Activated B cell treated with CpG ODN at 0.5 μM for 24 hours (primary cell): ENCODE measurements at regions of chr22 and their contacts with region 1.

Region 1: DNA sequence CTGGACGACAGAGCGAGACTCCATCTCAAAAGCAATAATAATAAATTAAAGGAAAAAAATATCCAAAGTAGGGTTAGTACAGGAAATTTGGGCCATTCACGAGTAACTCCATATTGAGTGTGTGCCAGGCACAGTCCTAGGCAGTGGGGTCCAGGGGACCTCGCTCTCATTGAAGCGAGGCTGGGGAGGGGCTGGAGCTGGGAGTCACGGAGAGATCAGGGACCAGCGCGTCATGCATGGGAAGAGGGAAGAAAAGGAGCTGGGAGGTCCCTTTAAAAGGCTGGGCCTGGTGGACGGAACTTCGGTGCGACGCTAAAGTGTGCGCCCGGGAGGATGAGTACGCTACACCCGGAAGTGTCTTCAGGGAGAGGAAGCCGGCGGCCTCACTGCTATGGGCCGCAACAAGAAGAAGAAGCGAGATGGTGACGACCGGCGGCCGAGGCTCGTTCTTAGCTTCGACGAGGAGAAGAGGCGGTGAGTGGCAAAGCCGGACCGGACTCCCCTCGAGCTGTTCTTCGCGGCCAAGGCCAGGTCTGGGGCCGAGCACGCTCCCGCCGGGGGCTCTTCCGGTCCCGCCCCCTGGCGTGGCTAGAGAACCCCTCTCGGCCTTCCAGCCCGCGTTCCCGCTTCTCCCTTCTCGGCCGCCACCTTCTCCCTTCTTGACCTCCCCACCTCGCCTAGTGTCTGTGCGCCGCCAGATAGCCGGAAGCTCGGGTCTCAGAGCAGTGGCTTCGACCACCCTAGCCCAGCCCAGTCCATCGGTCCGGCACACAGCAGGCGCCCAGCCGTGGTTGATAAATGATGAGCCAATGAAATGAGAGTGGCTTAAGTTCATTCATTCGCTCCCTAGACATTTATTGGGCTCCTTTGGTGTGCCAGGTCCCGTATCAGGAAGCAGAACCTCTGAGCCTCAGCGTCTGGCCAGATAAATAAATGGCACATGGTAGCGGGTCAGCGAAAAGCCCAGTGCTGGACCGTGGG is at the start of gene NOL12:
- DNase-seq: peak; percentile 79
- ATAC-seq: peak; percentile 87
- H3K4me3 Mint-ChIP-seq: peak within 1 kb of the TSS; percentile 97
- H3K27ac Mint-ChIP-seq: peak within 1 kb of the TSS; percentile 95
- H3K4me1 Mint-ChIP-seq: peaks cover 35% of the 10 kb centered on the region
- H3K27me3 Mint-ChIP-seq: no peaks in the 10 kb centered on the region
- CTCF ChIP-seq: no peak
- total RNA-seq, gene NOL12: 39.0 and 39.8 TPM in 2 replicates

Region 2: GRCh38 chr22:37316875-37317371 is 369.4 kb before region 1 on chr22:
- CTCF ChIA-PET with region 1: no interaction called
- POLR2A ChIA-PET with region 1: no interaction called
- intact Hi-C with region 1: no loop called
- DNase-seq: peak; percentile 59
- ATAC-seq: peak; percentile 82
- H3K4me3 Mint-ChIP-seq: no peak overlapping the region
- H3K27ac Mint-ChIP-seq: no peak overlapping the region
- H3K4me1 Mint-ChIP-seq: peaks cover 26% of the 10 kb centered on the region
- H3K27me3 Mint-ChIP-seq: peaks cover 4% of the 10 kb centered on the region
- CTCF ChIP-seq: no peak

Region 3: GRCh38 chr22:37633625-37634416 is 52.5 kb before region 1 on chr22:
- CTCF ChIA-PET with region 1: interaction called, 49 read pairs
- POLR2A ChIA-PET with region 1: interaction called, 13 read pairs
- intact Hi-C with region 1: no loop called
- DNase-seq: peak; percentile 69
- ATAC-seq: peak; percentile 78
- H3K4me3 Mint-ChIP-seq: peak overlapping the region; percentile 74
- H3K27ac Mint-ChIP-seq: peak overlapping the region; percentile 93
- H3K4me1 Mint-ChIP-seq: peaks cover 67% of the 10 kb centered on the region
- H3K27me3 Mint-ChIP-seq: no peaks in the 10 kb centered on the region
- CTCF ChIP-seq: no peak

Region 4: DNA sequence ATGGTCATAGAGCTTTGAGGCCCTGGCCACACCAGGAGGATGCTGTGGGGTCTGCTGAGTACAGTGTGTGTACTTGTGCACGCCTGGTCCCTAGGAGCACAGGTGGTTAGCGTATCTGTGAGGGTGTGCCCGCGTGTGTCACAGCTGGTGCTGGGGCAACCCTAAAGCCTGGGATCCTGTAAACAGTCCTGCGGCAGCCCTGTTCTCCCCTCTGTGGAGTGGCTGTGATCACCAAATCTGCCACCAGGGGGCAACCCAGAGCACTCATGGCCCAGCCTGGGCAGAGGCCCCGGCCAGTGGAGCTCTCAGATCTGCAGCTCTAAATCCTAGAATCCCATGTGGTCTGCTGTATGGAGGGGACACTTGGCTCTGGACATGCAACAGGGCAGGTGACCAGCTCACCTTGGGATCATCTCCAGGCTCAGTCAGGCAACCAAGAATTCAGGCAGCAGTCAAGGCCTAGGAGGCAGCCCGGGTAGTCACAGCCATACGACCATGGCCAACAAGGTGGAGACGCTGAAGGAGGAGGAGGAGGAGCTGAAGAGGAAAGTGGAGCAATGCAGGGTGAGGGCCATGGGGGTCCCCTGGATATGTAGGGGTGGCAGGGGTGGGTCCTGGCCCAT is 43.0 kb before region 1 on chr22:
- CTCF ChIA-PET with region 1: interaction called, 163 read pairs
- POLR2A ChIA-PET with region 1: interaction called, 25 read pairs
- intact Hi-C with region 1: loop called (anchors 1 kb)
- DNase-seq: peak; percentile 85
- ATAC-seq: peak; percentile 80
- H3K4me3 Mint-ChIP-seq: peak overlapping the region; percentile 28
- H3K27ac Mint-ChIP-seq: peak overlapping the region; percentile 59
- H3K4me1 Mint-ChIP-seq: peaks cover 34% of the 10 kb centered on the region
- H3K27me3 Mint-ChIP-seq: no peaks in the 10 kb centered on the region
- CTCF ChIP-seq: peak; percentile 64

Region 5: DNA sequence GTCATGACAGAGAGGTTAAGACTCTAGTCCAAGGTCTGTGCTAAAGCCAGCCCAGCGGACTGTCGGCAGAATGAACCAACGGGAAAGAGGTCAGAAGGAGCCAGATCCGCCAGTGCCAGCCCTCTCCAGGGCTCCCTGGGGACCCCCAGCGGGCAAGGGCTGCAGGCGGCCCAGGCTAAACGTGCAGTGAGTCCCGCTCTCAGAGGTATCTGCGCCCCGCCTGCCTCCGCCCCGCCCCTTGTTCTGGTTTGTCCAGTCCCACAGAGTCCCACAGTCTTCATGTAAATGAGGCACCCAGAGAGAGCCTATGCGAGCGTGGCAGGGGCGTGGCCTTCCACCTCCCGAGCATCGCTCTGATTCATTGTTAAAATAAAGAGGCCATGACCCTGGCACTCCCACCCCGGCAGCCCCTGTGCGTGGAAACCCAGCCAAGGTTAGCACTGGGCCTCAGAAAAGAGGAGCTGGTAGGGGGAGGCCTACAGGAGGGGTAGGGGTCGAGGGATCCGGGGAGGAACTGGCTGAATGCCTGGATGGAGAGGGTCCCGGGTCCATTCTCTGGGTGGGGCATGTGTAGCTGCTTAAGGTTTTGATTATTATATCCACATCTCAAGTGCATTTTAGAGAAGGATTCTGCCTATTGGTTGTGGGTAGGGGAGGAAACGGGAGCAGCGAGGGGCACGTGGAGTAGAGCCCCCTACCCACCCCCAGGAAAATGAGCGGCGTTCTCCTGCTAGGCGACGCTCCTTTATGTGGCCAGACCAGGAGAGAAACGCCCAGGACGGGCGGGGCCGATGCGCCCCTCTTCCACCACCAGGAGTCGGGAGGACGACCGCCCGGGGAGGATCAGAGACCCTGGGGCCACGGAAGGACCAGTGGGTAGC is 10.6 kb after region 1 on chr22 and contains the start of gene TRIOBP:
- CTCF ChIA-PET with region 1: interaction called, 3 read pairs
- POLR2A ChIA-PET with region 1: interaction called, 3 read pairs
- intact Hi-C with region 1: loop called (anchors 1 kb)
- DNase-seq: peak; percentile 76
- ATAC-seq: peak; percentile 99
- H3K4me3 Mint-ChIP-seq: peak within 1 kb of the TSS; percentile 60
- H3K27ac Mint-ChIP-seq: no peak within 1 kb of the TSS
- H3K4me1 Mint-ChIP-seq: peaks cover 15% of the 10 kb centered on the region
- H3K27me3 Mint-ChIP-seq: no peaks in the 10 kb centered on the region
- CTCF ChIP-seq: no peak
- total RNA-seq, gene TRIOBP: 25.5 and 27.4 TPM in 2 replicates

Region 6: DNA sequence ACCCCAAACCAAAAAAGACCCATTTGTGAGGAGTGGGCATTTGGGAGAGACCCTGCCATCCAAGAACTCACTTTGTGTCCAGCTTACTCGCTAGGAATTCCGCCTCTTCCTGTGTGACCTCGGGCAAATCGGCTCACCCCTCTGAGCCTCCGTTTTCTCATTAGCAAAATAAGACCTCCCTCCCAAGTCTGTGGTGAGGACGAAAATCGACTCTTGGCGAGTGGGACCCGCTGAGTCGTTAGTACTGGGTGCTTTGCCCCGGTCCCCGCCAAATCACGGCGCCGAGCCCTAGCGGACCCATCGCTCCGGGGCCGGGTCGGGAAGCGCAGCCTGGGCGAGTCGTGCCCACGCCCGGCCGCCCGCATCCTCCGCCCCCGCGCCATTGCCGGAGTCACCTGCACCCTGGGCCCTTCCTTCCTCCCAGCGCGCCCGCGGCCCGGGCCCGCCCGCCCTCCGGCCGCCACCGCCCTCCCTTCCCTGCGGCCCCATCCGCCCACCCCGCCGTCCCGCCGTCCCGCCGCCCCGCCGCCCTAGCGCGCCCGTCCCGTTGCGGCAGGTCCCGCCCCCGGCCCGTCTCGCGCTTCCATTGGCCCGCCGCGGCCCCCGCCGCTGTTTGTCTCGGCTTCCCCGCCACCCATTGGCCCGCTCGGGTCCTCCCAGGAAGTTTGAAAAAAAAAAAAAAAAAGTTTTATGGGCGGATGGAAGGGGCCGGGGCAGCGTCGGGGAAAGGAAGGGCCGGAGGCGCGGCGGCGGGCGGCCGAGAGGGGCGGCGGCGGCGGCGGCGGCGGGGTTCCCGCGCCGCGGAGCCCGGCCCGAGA is 59.5 kb after region 1 on chr22:
- CTCF ChIA-PET with region 1: no interaction called
- POLR2A ChIA-PET with region 1: no interaction called
- intact Hi-C with region 1: loop called (anchors 5 kb)
- DNase-seq: peak; percentile 77
- ATAC-seq: peak; percentile 95
- H3K4me3 Mint-ChIP-seq: peak overlapping the region; percentile 90
- H3K27ac Mint-ChIP-seq: peak overlapping the region; percentile 89
- H3K4me1 Mint-ChIP-seq: peaks cover 22% of the 10 kb centered on the region
- H3K27me3 Mint-ChIP-seq: no peaks in the 10 kb centered on the region
- CTCF ChIP-seq: no peak

Region 7: DNA sequence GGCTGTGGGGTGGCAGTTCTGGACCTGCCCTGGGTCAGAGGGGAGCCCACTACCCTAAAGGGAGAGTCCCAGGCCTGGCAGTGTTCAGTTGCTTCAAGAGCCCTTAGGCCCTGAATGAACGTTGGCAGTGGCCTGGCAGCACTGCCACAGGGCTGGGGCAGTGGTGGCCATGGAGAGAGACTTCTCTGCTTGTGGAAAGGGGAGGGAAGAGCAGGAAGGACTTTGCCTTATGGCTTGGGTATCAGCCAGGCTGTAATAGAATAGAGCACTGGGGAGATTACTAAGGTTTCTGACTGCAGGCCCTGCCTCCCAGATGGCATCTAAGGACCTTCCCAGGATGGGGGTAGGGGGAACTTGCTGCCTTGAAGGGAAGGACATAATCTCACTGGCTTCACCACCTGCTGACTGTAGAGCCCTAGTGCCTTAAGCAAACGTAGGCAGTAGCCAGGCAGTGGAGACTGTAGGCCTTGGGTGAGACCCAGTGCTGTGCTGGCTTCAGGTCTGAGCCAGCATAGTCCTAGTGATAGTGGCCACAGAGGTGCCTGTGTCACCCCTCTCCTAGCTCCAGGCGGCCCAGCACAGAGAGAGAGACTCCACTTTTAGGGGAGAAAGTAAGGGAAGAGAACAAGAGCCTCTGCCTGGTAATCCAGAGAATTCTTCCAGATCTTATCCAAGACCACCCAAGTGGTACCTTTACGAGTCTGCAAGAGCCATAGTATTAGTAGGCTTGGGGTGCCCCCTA is 467.7 kb after region 1 on chr22:
- CTCF ChIA-PET with region 1: no interaction called
- POLR2A ChIA-PET with region 1: no interaction called
- intact Hi-C with region 1: no loop called
- DNase-seq: no peak
- ATAC-seq: no peak
- H3K4me3 Mint-ChIP-seq: no peak overlapping the region
- H3K27ac Mint-ChIP-seq: no peak overlapping the region
- H3K4me1 Mint-ChIP-seq: peaks cover 12% of the 10 kb centered on the region
- H3K27me3 Mint-ChIP-seq: no peaks in the 10 kb centered on the region
- CTCF ChIP-seq: no peak